PC-9 (cell line): ENCODE measurements at regions of chr1 and their contacts with region 1.

Region 1: DNA sequence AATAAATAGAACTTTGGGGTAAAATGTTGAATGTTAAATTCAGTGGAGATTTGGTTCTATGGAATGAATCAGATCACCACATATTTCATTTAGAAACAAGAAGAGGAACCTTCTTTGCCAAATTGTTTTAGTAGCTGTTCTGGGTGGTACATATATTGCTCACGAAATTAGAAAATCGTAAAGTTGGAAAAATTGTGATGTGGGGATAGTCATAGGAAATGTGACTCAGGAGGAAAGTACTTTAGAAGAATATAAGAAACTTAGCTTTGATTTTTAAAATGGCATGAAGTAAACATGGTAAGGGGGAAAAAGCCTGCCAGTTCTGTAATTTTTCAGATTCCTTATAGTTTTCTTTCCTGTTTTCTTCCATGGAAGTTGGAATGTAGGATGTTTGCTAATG is 27.4 kb downstream of the RRP15 start:
- DNase-seq: no peak
- H3K4me3 ChIP-seq: no peak overlapping the region
- H3K27ac ChIP-seq: no peak overlapping the region
- H3K4me1 ChIP-seq: no peaks in the 10 kb centered on the region
- H3K27me3 ChIP-seq: no peaks in the 10 kb centered on the region
- CTCF ChIP-seq: no peak

Region 2: DNA sequence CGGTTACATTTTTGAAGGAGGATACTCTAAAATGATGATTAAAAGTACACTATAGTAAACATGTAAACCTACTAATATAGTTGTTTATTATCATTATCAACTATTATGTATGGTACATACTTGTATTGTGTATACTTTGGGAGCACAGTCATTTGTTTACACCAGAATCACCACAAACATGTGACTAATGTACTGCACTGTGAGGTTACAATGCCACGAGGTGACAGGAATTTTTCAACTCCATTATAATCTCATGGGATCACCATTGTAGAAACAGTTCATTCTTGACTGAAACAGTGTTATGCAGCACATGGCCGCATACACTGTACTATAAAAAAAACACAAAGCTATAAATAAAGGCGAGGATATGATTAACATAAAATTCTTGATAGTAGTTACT is 725.9 kb before region 1 on chr1:
- CTCF ChIA-PET with region 1: interaction called, 11 read pairs
- POLR2A ChIA-PET with region 1: no interaction called
- intact Hi-C with region 1: no loop called
- DNase-seq: no peak
- H3K4me3 ChIP-seq: no peak overlapping the region
- H3K27ac ChIP-seq: no peak overlapping the region
- H3K4me1 ChIP-seq: no peaks in the 10 kb centered on the region
- H3K27me3 ChIP-seq: no peaks in the 10 kb centered on the region
- CTCF ChIP-seq: no peak

Region 3: DNA sequence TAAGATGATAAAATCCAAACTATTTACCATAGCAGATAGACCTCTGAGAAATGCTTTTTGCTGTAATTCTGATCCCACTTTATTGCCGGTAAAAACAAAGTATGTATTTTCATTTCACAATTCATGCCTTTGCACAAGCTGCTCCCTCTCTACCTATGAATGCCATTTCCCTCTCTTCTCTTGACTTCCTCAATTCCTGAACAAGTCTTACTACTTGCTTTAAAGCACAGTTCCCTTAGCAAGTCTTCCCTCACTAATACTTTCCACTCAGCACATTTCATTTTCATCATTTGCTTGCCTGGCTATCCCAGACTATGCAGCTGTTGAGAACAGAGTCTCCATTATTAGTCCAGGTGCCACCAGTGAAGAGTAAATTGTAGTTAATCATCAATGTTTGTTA is 695.4 kb before region 1 on chr1:
- CTCF ChIA-PET with region 1: no interaction called
- POLR2A ChIA-PET with region 1: no interaction called
- intact Hi-C with region 1: no loop called
- DNase-seq: no peak
- H3K4me3 ChIP-seq: no peak overlapping the region
- H3K27ac ChIP-seq: no peak overlapping the region
- H3K4me1 ChIP-seq: no peaks in the 10 kb centered on the region
- H3K27me3 ChIP-seq: no peaks in the 10 kb centered on the region
- CTCF ChIP-seq: no peak

Region 4: DNA sequence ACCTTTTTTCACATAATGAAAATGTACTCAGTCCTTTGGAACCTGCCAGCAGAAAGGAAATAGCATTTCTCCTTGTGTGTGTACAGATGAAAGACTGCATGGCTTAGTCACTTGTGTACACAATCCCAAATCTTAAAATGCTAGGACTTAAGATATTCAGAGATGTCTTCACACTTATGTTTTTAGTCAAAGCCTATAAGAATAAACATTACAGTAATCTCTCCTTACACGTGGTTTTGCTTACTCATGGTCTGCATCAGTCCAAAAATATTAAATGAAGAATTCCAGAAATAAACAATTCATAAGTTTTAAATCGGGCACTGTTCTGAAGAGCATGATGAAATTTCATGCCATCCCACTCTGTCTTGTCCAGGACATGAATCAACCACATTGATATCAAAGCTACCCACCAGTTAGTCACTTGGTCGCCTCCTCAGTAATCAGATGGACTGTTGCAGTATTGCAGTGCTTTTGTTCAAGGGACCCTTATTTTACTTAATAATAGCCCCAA is 103.1 kb before region 1 on chr1:
- CTCF ChIA-PET with region 1: no interaction called
- POLR2A ChIA-PET with region 1: no interaction called
- intact Hi-C with region 1: no loop called
- DNase-seq: peak; percentile 5 to 55
- H3K4me3 ChIP-seq: no peak overlapping the region
- H3K27ac ChIP-seq: peak overlapping the region; percentile 52
- H3K4me1 ChIP-seq: peaks cover 24% of the 10 kb centered on the region
- H3K27me3 ChIP-seq: no peaks in the 10 kb centered on the region
- CTCF ChIP-seq: no peak

Region 5: GRCh38 chr1:218401998-218402785 is 89.7 kb after region 1 on chr1:
- CTCF ChIA-PET with region 1: no interaction called
- POLR2A ChIA-PET with region 1: no interaction called
- intact Hi-C with region 1: no loop called
- DNase-seq: no peak
- H3K4me3 ChIP-seq: no peak overlapping the region
- H3K27ac ChIP-seq: no peak overlapping the region
- H3K4me1 ChIP-seq: no peaks in the 10 kb centered on the region
- H3K27me3 ChIP-seq: no peaks in the 10 kb centered on the region
- CTCF ChIP-seq: no peak

Region 6: DNA sequence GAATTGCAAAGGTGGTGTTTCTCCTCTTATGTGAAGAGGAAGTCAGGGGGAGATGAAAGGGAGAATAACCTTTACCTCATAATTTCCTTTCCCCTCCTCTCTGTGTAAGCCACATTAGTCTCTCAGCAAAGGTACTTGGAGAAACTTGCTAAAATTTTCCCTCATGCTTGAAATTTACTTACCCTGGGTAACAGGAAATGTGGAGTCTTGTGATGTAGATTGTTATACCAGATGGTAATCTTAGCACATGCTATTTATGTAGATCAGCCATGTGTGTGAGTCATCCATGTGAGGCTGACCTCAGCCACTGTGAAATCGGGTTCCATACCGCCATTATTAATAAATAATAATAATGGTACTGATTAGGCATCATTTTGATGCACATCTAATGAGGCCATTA is 161.0 kb after region 1 on chr1:
- CTCF ChIA-PET with region 1: no interaction called
- POLR2A ChIA-PET with region 1: no interaction called
- intact Hi-C with region 1: no loop called
- DNase-seq: no peak
- H3K4me3 ChIP-seq: no peak overlapping the region
- H3K27ac ChIP-seq: no peak overlapping the region
- H3K4me1 ChIP-seq: peaks cover 13% of the 10 kb centered on the region; the same call in 1 of the 2 replicates
- H3K27me3 ChIP-seq: no peaks in the 10 kb centered on the region
- CTCF ChIP-seq: no peak